ENCODE measurements at regions of chr16 and their contacts with region 1.

Region 1: GRCh38 chr16:84672276-84673202 is 24.2 kb downstream of the KLHL36 start:
- DNase-seq: peak; percentile 89
- CTCF ChIP-seq: peak; percentile 92

Region 2: DNA sequence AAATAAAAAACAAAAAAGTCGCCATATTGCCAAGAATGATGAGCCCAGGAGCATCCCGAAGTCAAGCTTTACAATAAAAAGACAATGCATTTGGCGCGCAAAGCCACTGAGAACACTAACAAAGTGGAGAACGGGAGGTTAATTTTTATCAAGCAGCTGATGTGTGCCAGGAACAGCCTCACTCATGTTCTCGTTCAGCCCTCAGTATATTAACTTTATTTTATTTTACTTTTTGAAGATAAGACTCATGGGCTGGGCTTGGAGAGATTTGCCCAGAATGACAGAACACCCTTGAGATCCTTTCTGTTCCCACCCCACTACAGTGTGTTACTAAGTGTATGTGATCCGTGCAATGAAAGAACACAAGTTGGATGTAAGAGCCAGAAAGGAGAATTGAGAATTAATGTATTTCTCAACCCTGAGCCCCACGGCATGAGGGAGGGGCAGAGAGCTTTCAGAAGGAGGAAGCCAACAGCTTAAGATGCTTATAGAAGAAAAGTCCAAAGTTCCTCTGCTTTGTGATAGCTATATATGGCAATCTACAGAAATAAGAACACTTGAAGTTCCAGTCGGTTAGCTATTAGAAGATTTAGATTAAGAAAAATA is 103.1 kb before region 1 on chr16:
- CTCF ChIA-PET with region 1: no interaction called
- POLR2A ChIA-PET with region 1: no interaction called
- DNase-seq: no peak
- CTCF ChIP-seq: no peak

Region 3: DNA sequence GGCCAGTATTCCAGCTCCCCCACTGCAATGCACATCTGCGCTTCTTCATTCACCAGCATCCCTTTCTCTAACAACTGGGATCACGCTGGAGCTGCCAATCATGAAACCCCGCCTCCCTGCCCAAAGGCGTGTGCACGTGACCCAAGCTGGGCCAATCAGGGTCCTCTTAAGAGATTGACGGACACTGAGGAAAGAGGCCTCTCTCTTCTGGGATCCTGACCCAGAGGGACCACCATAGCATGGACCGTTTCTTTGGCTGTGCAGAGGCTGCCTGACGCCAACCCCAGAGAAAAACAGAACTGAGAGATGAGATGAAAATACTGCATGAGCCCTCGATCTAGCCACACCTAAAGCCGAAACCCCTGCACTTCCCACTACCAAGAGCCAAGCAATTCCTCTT is 86.7 kb before region 1 on chr16:
- CTCF ChIA-PET with region 1: no interaction called
- POLR2A ChIA-PET with region 1: no interaction called
- DNase-seq: peak; percentile 66
- CTCF ChIP-seq: no peak

Region 4: GRCh38 chr16:84647828-84648594 is 24.5 kb before region 1 on chr16 and contains the start of gene KLHL36:
- CTCF ChIA-PET with region 1: interaction called, 23 read pairs
- POLR2A ChIA-PET with region 1: no interaction called
- DNase-seq: peak; percentile 95
- CTCF ChIP-seq: no peak

Region 5: DNA sequence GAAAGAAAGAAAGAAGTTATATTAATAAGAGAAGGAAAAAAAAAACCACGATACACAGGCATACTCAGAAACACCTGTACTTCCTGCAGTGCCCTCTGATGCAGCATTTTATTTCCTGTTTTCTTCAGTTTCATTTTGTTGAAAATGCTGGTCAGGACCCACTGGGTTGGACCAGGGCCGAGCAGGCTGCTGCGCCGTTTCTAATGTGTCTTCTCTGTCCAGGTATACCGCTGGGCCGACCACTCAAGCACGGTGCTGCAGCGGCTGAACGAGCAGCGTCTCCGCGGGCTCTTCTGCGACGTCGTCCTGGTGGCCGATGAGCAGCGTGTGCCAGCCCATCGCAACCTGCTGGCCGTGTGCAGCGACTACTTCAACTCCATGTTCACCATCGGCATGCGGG is 15.9 kb before region 1 on chr16:
- CTCF ChIA-PET with region 1: interaction called, 63 read pairs
- POLR2A ChIA-PET with region 1: interaction called, 3 read pairs
- DNase-seq: no peak
- CTCF ChIP-seq: no peak

Region 6: GRCh38 chr16:84687715-84688114 is 15.2 kb after region 1 on chr16:
- CTCF ChIA-PET with region 1: interaction called, 51 read pairs
- POLR2A ChIA-PET with region 1: no interaction called
- DNase-seq: peak; percentile 52
- CTCF ChIP-seq: no peak

Region 7: GRCh38 chr16:84699712-84700445 is 27.3 kb after region 1 on chr16 and contains the start of gene USP10:
- CTCF ChIA-PET with region 1: interaction called, 15 read pairs
- POLR2A ChIA-PET with region 1: no interaction called
- DNase-seq: peak; percentile 99
- CTCF ChIP-seq: no peak

Region 8: GRCh38 chr16:84714028-84714427 is 41.5 kb after region 1 on chr16:
- CTCF ChIA-PET with region 1: interaction called, 16 read pairs
- POLR2A ChIA-PET with region 1: no interaction called
- DNase-seq: no peak
- CTCF ChIP-seq: no peak

Region 9: DNA sequence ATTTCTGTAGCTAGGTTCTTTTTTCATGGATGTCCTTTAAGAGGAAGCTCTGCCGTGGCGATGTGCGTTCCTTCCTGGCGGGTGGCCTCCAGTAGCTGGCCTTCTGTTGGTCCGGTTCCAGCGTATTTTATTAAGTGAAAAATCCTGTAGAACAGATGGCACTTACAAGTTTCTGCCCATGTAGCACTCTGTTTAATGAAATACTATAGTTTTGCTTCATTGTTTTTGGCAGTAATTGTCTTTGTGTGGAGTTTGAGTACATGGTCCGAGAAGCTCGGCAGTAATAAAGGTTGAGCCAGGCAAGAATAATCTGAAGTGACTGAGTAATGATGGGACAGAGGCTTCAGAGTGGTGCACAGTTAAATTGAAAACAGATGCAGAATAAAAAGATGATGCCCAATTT is 47.6 kb after region 1 on chr16:
- CTCF ChIA-PET with region 1: interaction called, 49 read pairs
- POLR2A ChIA-PET with region 1: no interaction called
- DNase-seq: no peak
- CTCF ChIP-seq: no peak